Posterior vena cava (tissue), 2 donors: ENCODE measurements at regions of chr17 and their contacts with region 1.

Region 1: DNA sequence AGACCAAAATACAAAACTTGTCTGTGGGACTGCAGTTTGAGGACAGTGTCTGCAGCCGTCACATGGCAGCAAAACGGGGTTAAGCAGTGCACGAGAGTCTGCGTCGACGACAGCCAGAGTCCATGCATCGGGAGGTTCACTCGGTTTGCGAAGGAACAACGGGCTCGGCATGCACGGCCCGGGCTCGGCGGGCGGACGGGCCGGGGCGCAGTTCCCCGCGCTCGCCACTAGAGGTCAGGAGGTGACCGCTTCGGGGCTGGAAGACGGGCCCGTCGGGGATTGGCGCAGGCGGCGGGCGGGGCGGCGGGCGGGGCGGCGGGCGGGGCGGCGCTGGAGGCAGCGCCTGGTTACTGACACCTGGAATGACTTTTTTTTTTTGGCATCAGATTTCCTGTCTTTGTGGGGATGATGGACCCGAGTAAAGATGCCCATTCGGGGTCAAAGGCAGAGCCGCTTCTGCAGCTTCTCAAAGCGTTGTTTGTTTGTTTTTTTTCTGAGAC is 6.5 kb downstream of the SCGB1C2 start:
- DNase-seq: peak; percentile 95

Region 2: DNA sequence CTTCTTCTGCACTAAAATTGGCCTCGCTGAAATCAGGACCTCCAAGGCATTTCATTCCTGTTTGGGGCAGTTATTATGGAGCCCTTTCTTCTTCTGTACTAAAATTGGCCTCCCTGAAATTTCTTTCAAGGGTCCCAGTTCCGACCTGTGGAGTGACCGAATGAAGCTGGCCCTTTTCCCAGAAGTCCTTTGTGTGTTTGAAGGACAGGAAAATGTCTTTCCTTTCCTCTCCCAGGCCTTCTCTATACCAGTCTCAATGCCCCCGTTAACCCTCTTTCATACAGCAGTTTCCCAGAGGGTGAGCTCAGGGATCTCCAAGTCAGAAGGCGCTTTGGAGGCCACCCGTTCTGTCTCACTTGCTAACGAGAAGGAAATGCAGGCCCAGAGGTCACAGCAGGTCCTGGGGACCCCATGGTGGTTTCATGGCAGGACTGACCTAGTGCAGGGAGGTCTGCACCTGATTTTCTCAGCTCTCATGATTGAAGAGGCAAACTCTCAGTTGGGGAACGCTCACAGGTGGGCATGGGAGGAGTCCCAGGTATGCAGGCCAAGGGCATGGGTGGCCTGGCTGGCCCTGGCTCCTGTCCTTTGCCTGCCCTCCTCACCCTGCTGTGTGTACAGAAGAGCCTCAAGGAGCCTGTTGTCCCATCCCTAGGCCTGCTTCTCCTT is 74.7 kb after region 1 on chr17:
- intact Hi-C with region 1: no loop called
- DNase-seq: peak; percentile 34

Region 3: GRCh38 chr17:233473-233941 is 89.7 kb after region 1 on chr17:
- intact Hi-C with region 1: no loop called
- DNase-seq: peak; percentile 84

Region 4: DNA sequence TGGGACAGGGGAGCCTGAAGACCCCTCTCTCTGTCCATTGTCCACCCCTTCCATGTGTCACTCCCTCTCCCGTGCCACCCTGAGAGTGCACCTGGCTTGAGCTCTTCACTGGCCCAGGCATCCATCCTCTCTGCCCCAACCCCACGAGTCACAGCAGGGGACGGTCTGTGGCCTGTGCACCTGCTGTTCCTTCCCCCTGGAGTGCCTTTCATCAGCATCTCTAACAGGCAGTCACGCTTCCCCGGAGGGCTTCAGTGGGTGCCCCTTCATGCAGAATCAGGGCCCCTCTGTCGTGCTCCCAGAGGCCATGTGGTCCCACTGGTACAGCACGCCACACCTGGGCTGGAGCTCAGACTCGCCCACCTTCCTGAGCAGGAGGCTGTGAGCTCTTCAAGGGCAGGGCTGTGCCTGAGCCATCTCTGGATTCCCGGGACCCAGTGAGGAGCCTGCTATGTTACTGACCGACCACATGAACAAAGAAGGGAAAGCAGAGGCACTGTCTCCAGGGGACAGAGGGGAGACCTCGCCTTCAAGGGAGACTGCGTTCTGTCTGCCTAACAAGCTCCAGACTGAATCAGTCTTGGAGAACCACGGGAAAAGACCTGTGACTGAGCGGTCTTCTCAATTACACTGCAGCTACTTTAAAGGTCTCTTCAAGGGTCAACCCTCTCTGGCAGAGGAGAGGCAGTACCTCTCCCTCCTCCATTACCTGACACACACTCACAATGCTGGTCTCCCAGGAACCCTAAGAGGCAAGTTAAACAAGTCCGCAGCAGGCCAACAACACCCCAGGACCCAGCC is 116.4 kb after region 1 on chr17:
- intact Hi-C with region 1: no loop called
- DNase-seq: peak; percentile 69

Region 5: GRCh38 chr17:385926-386876 is 242.4 kb after region 1 on chr17:
- intact Hi-C with region 1: loop called (anchors 5 kb)
- DNase-seq: peak; percentile 96

Region 6: GRCh38 chr17:393806-394717 is 250.2 kb after region 1 on chr17:
- intact Hi-C with region 1: loop called (anchors 5 kb)
- DNase-seq: peak; percentile 69

Region 7: GRCh38 chr17:921161-921560 is 777.3 kb after region 1 on chr17:
- intact Hi-C with region 1: loop called in 1 of 2 experiments (anchors 5 kb)
- DNase-seq: no peak